ENCODE measurements at regions of chr12 and their contacts with region 1.

Region 1: DNA sequence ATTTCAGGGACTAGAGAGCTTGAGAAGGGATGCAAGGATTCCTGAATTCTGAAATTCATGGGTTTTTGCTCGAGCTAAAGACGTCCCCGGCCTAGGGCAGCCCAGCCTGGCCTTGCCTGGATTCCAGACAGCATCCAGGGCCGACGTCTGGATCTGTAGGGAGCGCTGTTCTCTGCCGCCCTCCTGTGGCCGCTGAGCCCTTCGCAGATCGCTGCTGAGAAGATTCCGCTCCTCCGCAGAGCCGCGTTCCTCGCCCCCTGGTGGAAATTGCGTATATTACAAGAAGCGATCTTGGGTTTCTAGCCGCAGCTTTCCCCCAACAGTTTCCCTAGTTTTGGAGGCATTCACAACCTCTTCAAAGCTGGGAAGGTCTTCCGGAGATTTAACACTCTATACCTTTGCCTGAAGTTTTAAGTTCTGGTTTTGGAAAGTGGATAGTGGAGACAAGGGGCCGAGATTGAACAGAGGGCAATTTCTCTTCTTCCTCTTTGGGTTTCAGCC is 5.1 kb downstream of the CISTR start:
- DNase-seq: peak; percentile 94
- ATAC-seq: peak; percentile 86
- H3K4me3 Mint-ChIP-seq: no peak overlapping the region
- H3K27ac Mint-ChIP-seq: no peak overlapping the region
- H3K4me1 Mint-ChIP-seq: peaks cover 2% of the 10 kb centered on the region
- H3K27me3 Mint-ChIP-seq: peaks cover 38% of the 10 kb centered on the region

Region 2: DNA sequence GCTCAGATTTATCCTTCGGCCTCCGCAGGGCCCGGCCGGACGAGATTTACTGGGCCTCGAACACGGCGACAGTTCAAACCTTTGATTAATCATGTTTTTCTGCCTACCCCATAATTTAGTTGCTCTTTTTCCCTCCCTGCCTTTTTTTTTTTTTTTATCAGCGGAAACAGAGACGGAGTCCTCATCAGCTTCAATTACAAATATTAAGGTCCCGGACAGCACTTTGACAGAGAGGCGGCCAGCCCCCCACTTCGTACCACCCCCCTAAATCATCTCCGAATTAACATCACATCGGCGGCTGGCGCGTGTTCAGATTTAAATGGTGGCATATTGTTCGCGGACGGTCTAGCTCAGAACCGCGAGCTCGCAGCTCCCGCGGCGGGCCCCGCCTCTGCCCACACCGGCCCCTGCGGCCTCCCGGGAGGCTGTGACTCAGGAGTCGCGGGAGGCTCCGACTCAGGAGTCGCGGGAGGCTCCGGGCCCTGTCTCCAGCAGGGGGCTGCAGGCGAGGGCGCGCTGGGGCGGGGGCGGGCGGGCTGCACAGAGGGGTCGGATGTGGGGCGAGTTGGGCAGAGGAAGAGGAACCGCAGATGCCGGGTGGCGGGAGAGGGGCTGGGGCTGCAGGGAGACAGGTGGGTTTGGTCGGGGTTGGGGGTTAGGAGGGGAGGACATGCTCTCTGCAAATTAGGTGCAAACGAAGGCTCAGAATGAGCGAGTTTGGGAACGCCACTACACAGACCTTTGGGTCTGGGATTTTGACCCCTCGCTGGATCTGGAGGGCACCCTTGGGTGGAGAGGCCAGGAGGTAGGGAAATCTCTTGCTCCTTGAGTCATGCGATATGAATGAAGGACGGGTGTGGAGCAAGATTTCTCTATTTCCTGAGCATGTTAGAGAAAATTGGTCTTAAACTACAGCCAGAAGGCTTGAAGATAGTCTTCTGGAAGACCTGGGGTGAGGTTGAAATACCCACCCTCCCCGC is 51.2 kb before region 1 on chr12:
- CTCF ChIA-PET with region 1: interaction called, 99 read pairs
- POLR2A ChIA-PET with region 1: interaction called, 3 read pairs
- intact Hi-C with region 1: no loop called
- DNase-seq: peak; percentile 67
- ATAC-seq: peak; percentile 82
- H3K4me3 Mint-ChIP-seq: peak overlapping the region; percentile 53
- H3K27ac Mint-ChIP-seq: peak overlapping the region; percentile 20
- H3K4me1 Mint-ChIP-seq: peaks cover 27% of the 10 kb centered on the region
- H3K27me3 Mint-ChIP-seq: peaks cover 69% of the 10 kb centered on the region

Region 3: GRCh38 chr12:53709671-53710070 is 37.0 kb before region 1 on chr12:
- CTCF ChIA-PET with region 1: interaction called, 144 read pairs
- POLR2A ChIA-PET with region 1: no interaction called
- intact Hi-C with region 1: no loop called
- DNase-seq: no peak
- ATAC-seq: no peak
- H3K4me3 Mint-ChIP-seq: no peak overlapping the region
- H3K27ac Mint-ChIP-seq: no peak overlapping the region
- H3K4me1 Mint-ChIP-seq: no peaks in the 10 kb centered on the region
- H3K27me3 Mint-ChIP-seq: peaks cover 14% of the 10 kb centered on the region

Region 4: DNA sequence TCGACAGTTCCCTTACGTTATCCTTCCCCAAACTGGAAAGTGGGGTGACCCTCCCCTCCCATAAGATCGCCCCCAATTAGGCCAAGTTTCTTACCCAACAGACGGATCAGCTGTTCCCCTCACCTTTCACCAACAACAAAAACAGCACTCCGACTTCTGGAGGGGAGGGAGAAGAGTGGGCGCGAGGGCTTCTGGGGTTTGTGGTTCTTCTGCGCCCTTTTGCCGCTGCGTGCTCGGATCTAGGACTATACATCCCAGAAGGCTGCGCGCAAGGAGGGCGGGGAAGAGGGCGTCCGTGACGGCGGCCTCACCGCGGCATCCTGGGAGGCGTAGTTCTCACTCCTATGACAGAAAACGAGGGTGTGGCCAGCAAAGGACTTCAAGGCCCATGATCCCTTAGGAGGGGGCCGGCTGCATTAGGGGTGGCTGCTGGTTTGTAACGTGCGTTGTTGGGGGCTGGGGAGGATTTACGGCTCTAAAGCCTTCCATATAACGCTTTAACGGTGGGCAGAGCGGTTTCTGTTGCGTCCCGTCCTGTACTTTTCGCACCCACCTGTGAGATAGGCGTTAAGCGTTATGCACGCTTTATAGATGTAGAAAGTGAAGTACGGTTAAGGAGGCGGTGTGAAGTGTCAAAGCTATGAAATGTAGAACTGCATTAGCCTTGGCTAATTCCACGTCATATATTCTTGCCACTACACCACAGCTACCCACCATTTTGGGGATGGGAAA is 19.2 kb before region 1 on chr12 and contains the start of gene CALCOCO1:
- CTCF ChIA-PET with region 1: interaction called, 230 read pairs
- POLR2A ChIA-PET with region 1: interaction called, 3 read pairs
- intact Hi-C with region 1: loop called (anchors 1 to 2 kb)
- DNase-seq: peak; percentile 99
- ATAC-seq: peak; percentile 99
- H3K4me3 Mint-ChIP-seq: peak within 1 kb of the TSS; percentile 80
- H3K27ac Mint-ChIP-seq: peak within 1 kb of the TSS; percentile 73
- H3K4me1 Mint-ChIP-seq: peaks cover 20% of the 10 kb centered on the region
- H3K27me3 Mint-ChIP-seq: no peaks in the 10 kb centered on the region
- total RNA-seq, gene CALCOCO1: 17.1 to 20.4 TPM

Region 5: DNA sequence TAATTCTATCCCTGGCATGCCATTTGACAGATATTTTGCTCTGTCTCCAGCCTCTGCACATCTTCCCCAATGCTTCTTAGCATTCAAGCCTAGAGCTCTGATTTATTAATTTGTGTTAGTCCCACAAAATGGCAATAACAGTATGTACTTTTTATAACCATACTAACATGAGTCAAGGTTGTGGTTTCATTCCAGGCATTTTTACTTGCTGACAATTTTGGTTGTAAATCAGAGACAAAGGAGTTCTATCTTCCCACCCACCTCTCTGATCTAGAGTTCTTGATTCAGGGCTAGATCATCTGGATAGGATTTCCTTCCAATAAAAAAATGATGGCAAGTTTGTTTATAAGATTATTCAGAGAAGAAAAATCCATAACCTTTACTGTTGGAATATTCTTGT is 23.6 kb after region 1 on chr12:
- CTCF ChIA-PET with region 1: interaction called, 13 read pairs
- POLR2A ChIA-PET with region 1: no interaction called
- intact Hi-C with region 1: no loop called
- DNase-seq: no peak
- ATAC-seq: no peak
- H3K4me3 Mint-ChIP-seq: no peak overlapping the region
- H3K27ac Mint-ChIP-seq: no peak overlapping the region
- H3K4me1 Mint-ChIP-seq: no peaks in the 10 kb centered on the region
- H3K27me3 Mint-ChIP-seq: peaks cover 35% of the 10 kb centered on the region

Region 6: DNA sequence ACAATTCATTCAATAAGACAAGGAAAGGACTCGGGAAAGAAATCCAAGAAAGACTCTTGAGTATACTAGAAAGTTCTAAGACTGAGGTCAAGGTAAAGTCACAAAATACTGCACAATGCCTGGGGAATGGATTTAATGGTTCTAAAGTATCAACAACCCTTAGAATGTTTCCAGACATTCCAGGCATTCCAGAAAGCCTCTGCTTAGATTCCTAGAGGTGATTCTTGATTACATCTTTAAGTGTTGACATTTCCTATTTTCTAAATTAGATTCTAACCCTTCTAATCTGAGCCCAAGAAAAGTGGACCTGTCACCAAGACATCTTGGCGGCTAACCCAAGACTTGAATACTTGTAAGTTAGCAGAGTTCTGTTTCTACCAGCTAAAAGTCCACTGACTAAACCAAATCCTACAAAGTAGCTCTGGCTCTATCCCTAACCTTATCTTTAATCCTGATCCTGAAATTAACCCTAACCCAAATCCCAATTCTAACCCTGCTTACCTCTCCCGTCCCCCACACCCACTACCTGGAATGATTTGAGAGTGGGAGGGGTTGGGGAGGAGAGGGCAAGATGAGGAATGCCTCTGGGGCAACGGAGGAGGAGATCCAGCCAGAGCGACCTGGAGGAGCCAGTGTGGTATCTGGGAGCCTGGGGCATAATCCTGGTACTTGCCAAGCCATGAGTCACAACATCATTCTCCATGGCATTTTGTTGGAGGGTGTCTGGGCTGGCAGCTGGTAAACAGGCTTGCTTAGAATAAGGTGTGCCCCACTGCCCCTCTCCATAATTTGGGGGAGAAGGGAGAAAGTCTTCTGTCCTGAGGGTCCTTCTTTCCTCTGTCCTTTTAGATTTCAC is 98.6 kb after region 1 on chr12:
- CTCF ChIA-PET with region 1: no interaction called
- POLR2A ChIA-PET with region 1: no interaction called
- intact Hi-C with region 1: no loop called
- DNase-seq: no peak
- ATAC-seq: no peak
- H3K4me3 Mint-ChIP-seq: no peak overlapping the region
- H3K27ac Mint-ChIP-seq: no peak overlapping the region
- H3K4me1 Mint-ChIP-seq: no peaks in the 10 kb centered on the region
- H3K27me3 Mint-ChIP-seq: peaks cover 46% of the 10 kb centered on the region

Region 7: DNA sequence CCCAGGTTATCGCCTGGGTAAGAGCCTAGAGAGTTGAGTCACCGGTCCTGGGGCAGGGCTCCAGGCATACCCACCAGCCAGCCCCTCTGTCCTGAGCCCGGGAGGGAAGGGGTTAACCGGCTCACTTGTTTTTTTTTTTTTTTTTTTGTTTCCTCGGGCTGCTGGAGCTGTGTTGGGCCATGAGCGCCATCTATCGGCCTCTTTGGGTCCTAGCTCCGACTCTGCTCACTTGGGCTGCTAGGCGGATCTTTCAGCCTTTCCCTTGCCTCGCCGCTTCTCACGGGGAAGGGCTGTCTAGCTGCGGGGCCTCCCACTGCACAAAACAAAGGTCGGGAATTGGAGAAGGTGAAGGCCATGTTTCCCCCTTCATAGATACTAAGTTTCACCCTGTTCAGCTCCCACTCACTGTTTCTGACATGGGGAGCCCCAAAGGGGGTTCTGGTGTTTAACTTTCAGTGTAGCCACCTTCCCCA is 444.9 kb after region 1 on chr12:
- CTCF ChIA-PET with region 1: no interaction called
- POLR2A ChIA-PET with region 1: no interaction called
- intact Hi-C with region 1: no loop called
- DNase-seq: peak; percentile 87
- ATAC-seq: peak; percentile 60
- H3K4me3 Mint-ChIP-seq: no peak overlapping the region
- H3K27ac Mint-ChIP-seq: no peak overlapping the region
- H3K4me1 Mint-ChIP-seq: peaks cover 17% of the 10 kb centered on the region
- H3K27me3 Mint-ChIP-seq: peaks cover 35% of the 10 kb centered on the region

Measured in activated CD4-positive, alpha-beta T cell treated with anti-CD3 and anti-CD28 coated beads for 36 hours (primary cell).